Aorta (tissue), 5 donors: ENCODE measurements at regions of chr22 and their contacts with region 1.

Region 1: DNA sequence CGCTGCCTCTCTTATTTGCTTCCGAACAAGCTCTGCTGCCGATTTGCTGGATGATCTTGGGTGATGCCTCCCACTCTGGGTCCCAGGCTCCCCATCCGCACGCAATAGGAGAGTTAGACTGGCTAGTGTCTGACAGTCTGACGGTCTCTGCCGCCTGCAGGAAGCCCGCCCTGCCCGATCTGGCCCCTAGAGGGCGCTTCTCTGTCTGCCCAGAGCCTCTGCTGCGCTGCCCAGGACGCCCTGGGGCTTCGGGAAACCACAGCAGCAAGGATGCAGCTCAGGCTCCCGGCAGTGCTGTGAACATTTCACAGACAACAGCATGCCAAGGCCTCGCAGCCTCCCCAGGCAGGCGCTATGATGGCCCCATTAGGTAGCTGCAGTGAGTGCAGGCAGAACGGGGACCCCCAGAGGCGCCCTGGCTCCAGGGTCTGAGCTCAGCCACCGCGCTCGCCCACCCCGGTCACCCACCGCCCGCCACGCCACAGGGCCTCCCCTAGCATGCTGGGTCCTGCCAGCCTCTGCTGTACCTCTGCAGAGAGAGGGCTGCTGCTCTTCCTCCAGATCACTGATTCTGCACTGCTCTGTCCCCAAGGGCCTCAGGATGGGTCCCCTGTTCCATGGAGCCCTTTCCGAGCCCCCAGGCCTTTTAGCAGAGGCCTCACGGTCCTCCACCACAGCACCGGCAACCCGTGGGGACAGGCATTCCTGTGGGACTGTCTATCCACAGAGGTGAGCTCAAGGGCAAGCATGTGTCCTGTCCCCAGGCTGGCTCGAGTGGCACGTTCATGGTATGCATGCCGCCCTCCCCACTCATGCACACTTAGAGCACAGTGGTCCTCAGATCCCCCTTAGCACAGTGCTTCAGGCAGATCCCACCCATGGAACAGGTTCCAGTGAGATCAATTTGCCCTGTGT is 4.3 kb upstream of the BAIAP2L2 start:
- DNase-seq: peak; percentile 91 to 96
- ATAC-seq: peak; percentile 85
- H3K4me3 ChIP-seq: no peak overlapping the region
- H3K27ac ChIP-seq: no peak overlapping the region
- H3K4me1 ChIP-seq: no peaks in the 10 kb centered on the region
- H3K27me3 ChIP-seq: no peaks in the 10 kb centered on the region

Region 2: DNA sequence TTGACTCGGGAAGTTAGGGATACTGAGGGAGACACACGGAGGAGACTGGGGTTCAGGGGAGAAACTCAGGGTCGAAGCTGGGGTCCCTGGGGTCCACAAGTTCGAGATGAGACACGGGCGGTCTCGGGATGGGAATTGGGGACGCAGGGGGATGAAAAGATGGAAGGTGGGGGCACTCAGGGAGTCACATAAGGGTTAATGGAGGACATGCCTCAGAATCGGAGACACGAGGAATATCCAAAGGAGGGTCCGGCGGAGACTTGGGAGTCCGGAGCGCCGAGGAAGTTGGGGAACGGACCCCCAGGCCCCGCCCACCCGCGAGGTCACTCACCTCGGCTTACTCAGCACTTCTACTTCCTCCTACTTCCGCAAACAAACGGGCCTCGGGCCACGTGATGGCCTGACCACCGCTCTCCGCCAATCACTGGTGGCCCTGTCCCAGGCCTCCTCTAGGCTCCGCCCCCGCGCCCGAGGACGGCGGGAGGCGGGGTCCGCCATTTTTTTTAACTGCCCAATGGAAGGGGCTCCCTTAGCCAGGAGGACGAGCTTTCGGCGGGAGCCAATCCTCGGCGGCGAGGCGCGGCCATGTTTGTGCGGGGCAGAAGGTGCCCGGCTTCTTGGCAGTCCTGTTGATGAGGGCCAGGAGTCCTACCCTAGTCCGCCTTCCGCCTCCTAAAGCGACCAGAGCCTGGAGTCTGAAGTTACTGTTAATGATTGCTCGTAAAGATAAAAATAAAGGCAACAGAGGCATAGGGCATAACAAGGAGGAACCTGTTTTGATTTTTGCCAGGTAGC is 66.9 kb after region 1 on chr22 and contains the start of gene PLA2G6:
- intact Hi-C with region 1: loop called in 1 of 2 experiments (anchors 5 kb)
- DNase-seq: peak; percentile 99
- ATAC-seq: peak; percentile 97
- H3K4me3 ChIP-seq: peak within 1 kb of the TSS; percentile 32 to 53
- H3K27ac ChIP-seq: peak within 1 kb of the TSS in 1 of 2 donors; percentile 29
- H3K4me1 ChIP-seq: no peaks in the 10 kb centered on the region
- H3K27me3 ChIP-seq: no peaks in the 10 kb centered on the region
- total RNA-seq, gene PLA2G6: 25.0 to 25.8 TPM